A549 (cell line): ENCODE measurements at regions of chr12 and their contacts with region 1.

Region 1: GRCh38 chr12:120662879-120663278 is 22.5 kb downstream of the CABP1 start:
- DNase-seq: no peak
- ATAC-seq: no peak
- H3K4me3 ChIP-seq: no peak overlapping the region
- H3K27ac ChIP-seq: no peak overlapping the region
- H3K4me1 ChIP-seq: no peaks in the 10 kb centered on the region
- CTCF ChIP-seq: no peak
- EP300 ChIP-seq: no peak
- POLR2A ChIP-seq: no peak
- RAD21 ChIP-seq: no peak

Region 2: DNA sequence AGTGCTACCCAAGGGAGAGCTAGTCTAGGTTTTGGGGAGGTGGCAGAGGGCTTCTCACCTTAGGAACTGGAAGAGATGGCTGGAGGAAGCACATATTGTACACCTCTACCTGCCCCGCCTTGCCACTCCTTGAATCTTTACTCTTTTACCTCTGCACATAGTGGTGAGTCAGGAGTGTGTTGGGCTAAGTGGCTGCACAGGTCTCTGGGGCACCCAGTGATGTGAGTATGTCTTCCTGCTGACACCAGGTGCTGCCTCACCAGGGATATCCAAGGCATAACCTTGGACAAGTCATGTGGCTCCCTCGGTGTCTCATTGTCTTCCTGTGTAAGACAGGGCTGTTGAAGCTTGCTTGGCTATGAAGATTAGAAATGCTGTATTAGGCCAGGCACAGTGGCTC is 42.3 kb before region 1 on chr12:
- CTCF ChIA-PET with region 1: no interaction called
- POLR2A ChIA-PET with region 1: no interaction called
- DNase-seq: no peak
- ATAC-seq: peak in 1 of 2 experiments; percentile 23; a peak in 1 of 6 replicates
- H3K4me3 ChIP-seq: no peak overlapping the region
- H3K27ac ChIP-seq: no peak overlapping the region
- H3K4me1 ChIP-seq: no peaks in the 10 kb centered on the region
- CTCF ChIP-seq: no peak
- EP300 ChIP-seq: no peak
- POLR2A ChIP-seq: no peak
- RAD21 ChIP-seq: no peak

Region 3: GRCh38 chr12:120677765-120678473 is 15.0 kb after region 1 on chr12:
- CTCF ChIA-PET with region 1: interaction called, 11 read pairs
- POLR2A ChIA-PET with region 1: no interaction called
- DNase-seq: peak; percentile 37 to 58
- ATAC-seq: peak; percentile 39 to 67; a peak in 3 of 6 replicates
- H3K4me3 ChIP-seq: no peak overlapping the region
- H3K27ac ChIP-seq: peak overlapping the region; percentile 12 to 62; a peak in 3 of 6 replicates
- H3K4me1 ChIP-seq: peaks cover 11% of the 10 kb centered on the region
- CTCF ChIP-seq: no peak
- EP300 ChIP-seq: no peak
- POLR2A ChIP-seq: no peak
- RAD21 ChIP-seq: no peak

Region 4: DNA sequence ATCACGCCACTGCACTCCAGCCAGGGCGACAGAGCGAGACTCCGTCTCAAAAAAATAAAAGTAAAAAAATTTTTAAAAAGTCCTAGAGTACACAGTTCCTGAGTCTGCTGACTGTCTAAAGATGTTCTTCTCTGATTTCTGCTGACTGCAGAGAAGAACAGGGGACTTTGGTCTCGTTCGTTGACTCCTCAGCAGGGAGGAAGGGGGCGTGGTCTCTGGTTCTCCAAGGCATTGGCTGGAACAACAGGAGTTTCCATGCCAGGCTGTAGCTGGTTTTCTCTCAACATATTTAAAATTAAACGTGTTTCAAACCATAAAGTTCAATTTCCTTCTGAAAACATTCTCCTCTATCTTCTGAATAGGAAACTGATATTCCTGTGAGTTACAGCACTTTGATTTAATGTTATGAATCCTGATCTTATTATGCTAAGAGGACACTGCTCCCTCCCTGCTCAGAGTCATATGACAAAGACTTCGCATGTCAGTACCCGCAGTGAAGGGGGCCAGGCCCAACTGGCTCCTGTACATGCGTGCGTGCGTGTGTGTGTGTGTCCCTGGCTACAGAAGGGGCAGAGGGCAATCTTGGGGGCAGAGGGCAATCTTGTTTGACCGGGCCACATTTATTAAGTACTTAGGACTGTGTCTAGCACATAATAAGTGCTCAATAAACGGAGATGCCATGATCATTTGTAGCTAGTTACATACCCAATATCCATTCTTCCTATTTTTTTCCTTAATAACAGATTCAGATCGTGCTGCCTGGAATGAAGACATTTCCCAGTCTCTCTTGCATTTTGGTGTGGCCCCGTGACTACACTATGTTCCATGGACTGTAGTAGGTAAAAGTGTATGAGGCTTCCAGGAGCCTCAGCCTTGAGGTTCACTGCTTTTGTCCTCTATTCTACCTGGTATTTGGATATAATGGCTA is 299.0 kb after region 1 on chr12:
- CTCF ChIA-PET with region 1: no interaction called
- POLR2A ChIA-PET with region 1: no interaction called
- DNase-seq: peak; percentile 46 to 66
- ATAC-seq: peak; percentile 55 to 59; a peak in 5 of 6 replicates
- H3K4me3 ChIP-seq: no peak overlapping the region
- H3K27ac ChIP-seq: peak overlapping the region; percentile 15 to 39; a peak in 4 of 6 replicates
- H3K4me1 ChIP-seq: peaks cover 42% of the 10 kb centered on the region
- CTCF ChIP-seq: no peak
- EP300 ChIP-seq: no peak
- POLR2A ChIP-seq: no peak
- RAD21 ChIP-seq: no peak